ENCODE measurements at regions of chr5 and their contacts with region 1.

Region 1: DNA sequence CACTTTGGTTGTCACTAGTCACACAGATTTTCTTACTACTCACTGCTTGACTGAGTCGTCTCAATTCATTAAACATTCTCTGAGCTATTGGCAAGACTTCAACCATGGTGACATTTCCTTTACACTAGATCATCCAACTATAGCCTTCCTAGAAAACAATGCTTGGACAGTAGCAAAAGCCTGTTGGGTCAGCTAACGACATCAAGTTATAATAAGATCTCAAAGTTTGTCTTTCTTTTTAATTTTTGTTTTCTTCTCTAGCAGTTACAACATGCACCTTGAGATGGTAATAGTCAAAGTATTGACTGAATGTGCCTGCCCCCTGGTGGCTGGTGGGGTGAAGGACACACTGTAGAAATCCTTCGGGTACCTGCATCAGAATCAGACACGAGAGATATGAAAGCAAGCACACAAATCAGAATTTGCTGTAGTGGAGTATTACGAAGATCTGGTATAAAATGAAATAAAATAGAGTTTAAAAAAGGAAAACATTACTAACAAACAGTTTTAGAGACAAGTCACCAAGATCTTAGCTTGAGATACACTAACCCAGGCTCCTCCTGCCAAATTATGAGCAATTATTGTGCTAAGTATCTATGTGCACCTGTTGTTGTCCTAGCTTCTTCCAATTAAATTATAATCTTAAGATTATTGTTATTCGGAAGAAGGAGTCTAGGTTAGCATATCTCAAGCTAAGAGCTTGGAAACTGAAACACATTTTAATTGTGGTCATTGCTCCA is 81.2 kb downstream of the ARL15 start:
- DNase-seq: peak; percentile 87
- H3K4me3 Mint-ChIP-seq: no peak overlapping the region
- H3K27ac Mint-ChIP-seq: no peak overlapping the region
- H3K4me1 Mint-ChIP-seq: peaks cover 2% of the 10 kb centered on the region
- H3K27me3 Mint-ChIP-seq: no peaks in the 10 kb centered on the region

Region 2: GRCh38 chr5:53170748-53171349 is 1058.4 kb before region 1 on chr5:
- CTCF ChIA-PET with region 1: interaction called, 6 read pairs
- intact Hi-C with region 1: loop called (anchors 1 kb)
- DNase-seq: peak; percentile 25
- H3K4me3 Mint-ChIP-seq: no peak overlapping the region
- H3K27ac Mint-ChIP-seq: no peak overlapping the region
- H3K4me1 Mint-ChIP-seq: no peaks in the 10 kb centered on the region
- H3K27me3 Mint-ChIP-seq: peaks cover 3% of the 10 kb centered on the region

Region 3: GRCh38 chr5:53425598-53426511 is 803.4 kb before region 1 on chr5:
- CTCF ChIA-PET with region 1: interaction called, 4 read pairs
- intact Hi-C with region 1: loop called (anchors 2 kb)
- DNase-seq: peak; percentile 59
- H3K4me3 Mint-ChIP-seq: no peak overlapping the region
- H3K27ac Mint-ChIP-seq: no peak overlapping the region
- H3K4me1 Mint-ChIP-seq: no peaks in the 10 kb centered on the region
- H3K27me3 Mint-ChIP-seq: peaks cover 20% of the 10 kb centered on the region

Region 4: DNA sequence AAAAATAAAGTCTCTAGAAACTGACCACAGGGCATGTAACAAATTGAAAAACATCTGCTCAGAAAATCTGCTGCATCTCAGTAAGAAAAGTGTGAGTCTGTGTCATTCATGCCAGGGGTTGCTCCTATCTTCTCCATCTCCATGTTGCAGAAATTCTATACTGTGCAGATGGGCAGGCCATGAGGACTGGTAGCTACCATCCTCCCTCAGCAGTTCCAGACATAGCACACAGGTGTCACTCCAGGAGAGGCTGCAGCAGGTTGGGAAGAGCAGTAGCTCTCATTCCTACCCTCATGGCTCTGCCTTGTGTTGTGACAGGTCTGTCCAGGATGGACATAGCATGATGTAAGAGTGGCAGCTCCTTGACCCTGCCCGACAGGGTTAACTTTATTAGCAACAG is 495.4 kb before region 1 on chr5:
- CTCF ChIA-PET with region 1: no interaction called
- intact Hi-C with region 1: no loop called
- DNase-seq: no peak
- H3K4me3 Mint-ChIP-seq: no peak overlapping the region
- H3K27ac Mint-ChIP-seq: no peak overlapping the region
- H3K4me1 Mint-ChIP-seq: no peaks in the 10 kb centered on the region
- H3K27me3 Mint-ChIP-seq: peaks cover 2% of the 10 kb centered on the region

Region 5: DNA sequence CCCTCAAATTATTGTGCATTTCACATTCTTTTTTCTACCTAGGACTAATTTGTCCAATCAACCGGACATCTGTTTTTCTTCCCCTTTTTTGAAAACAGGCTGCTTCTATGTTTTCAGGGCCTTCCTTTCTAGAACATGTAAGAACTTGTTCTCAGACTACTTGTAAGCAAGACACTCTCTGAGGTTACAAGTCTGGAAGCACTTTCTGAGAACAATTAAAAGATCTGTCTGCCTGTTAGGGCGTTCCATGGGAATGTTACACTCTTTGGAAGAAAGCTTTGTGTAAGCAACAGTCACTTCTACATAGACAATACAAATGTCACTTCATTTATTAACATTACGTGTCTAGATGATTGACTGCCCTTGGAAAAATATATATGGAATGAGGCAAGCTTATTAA is 175.4 kb after region 1 on chr5:
- CTCF ChIA-PET with region 1: no interaction called
- intact Hi-C with region 1: no loop called
- DNase-seq: no peak
- H3K4me3 Mint-ChIP-seq: no peak overlapping the region
- H3K27ac Mint-ChIP-seq: no peak overlapping the region
- H3K4me1 Mint-ChIP-seq: no peaks in the 10 kb centered on the region
- H3K27me3 Mint-ChIP-seq: no peaks in the 10 kb centered on the region

Region 6: GRCh38 chr5:54437418-54437817 is 208.2 kb after region 1 on chr5:
- CTCF ChIA-PET with region 1: no interaction called
- intact Hi-C with region 1: no loop called
- DNase-seq: no peak
- H3K4me3 Mint-ChIP-seq: no peak overlapping the region
- H3K27ac Mint-ChIP-seq: no peak overlapping the region
- H3K4me1 Mint-ChIP-seq: peaks cover 35% of the 10 kb centered on the region
- H3K27me3 Mint-ChIP-seq: no peaks in the 10 kb centered on the region

Measured in activated naive CD4-positive, alpha-beta T cell treated with anti-CD3 and anti-CD28 coated beads for 36 hours (primary cell).